PC-9 (cell line): ENCODE measurements at regions of chr18 and their contacts with region 1.

Region 1: GRCh38 chr18:62186774-62187542 is at the starts of genes PIGN and RELCH:
- DNase-seq: peak; percentile 89 to 96
- H3K4me3 ChIP-seq: peak within 1 kb of the TSS; percentile 92
- H3K27ac ChIP-seq: peak within 1 kb of the TSS; percentile 76
- H3K4me1 ChIP-seq: peaks cover 42% of the 10 kb centered on the region
- H3K27me3 ChIP-seq: no peaks in the 10 kb centered on the region
- CTCF ChIP-seq: no peak
- total RNA-seq, gene PIGN: 14.6 and 20.3 TPM in 2 replicates
- total RNA-seq, gene RELCH: 19.6 and 20.1 TPM in 2 replicates

Region 2: GRCh38 chr18:62128157-62128556 is 58.8 kb before region 1 on chr18:
- CTCF ChIA-PET with region 1: no interaction called
- POLR2A ChIA-PET with region 1: no interaction called
- intact Hi-C with region 1: no loop called
- DNase-seq: no peak
- H3K4me3 ChIP-seq: no peak overlapping the region
- H3K27ac ChIP-seq: no peak overlapping the region
- H3K4me1 ChIP-seq: no peaks in the 10 kb centered on the region
- H3K27me3 ChIP-seq: no peaks in the 10 kb centered on the region
- CTCF ChIP-seq: no peak

Region 3: DNA sequence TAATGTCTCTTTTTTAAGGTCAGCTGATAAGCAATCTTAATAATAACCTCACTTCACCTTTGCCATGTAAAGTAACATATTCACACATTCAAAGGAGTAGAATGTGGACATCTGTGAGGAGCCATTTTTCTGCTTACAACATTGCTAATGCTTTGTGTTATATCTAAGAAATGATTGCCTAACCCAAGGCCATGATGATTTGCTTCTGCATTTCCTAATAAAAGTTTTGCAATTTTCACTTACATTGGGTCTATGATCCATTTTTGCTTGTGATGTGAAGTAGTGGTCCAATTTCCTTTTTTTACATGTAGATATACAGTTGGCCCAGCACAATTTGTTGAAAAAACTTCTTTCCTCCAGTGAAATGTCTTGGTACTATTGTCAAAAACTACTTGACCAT is 22.1 kb after region 1 on chr18:
- CTCF ChIA-PET with region 1: no interaction called
- POLR2A ChIA-PET with region 1: no interaction called
- intact Hi-C with region 1: no loop called
- DNase-seq: no peak
- H3K4me3 ChIP-seq: no peak overlapping the region
- H3K27ac ChIP-seq: no peak overlapping the region
- H3K4me1 ChIP-seq: no peaks in the 10 kb centered on the region
- H3K27me3 ChIP-seq: no peaks in the 10 kb centered on the region
- CTCF ChIP-seq: no peak

Region 4: DNA sequence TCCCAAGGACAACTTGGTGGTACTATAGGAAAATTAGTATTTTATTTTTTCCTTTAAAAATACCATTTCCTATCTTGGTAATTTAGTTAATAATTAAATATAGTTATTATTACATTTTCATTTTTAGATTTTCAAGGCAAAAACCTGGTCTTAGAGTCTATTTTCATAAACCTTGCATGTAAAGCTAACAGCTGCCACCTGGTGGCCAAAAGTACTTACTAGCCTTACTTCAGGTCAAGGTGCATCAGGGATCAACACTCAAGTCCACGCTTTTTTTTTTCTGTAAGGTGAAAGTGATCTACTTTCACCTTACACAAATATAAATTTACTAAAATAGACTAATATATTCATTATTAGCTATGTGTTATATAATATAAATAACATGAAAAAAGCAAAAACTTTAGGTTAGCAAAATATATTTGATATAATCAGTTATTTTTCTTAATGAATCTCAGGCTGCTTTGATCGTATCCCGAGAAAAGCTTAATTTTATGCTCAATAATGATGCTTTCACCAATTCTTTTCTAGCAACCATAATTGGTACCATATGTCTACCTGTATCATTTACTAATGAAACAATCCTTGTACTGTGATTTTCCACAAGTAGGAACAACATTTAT is 62.6 kb after region 1 on chr18:
- CTCF ChIA-PET with region 1: no interaction called
- POLR2A ChIA-PET with region 1: no interaction called
- intact Hi-C with region 1: loop called (anchors 1 kb)
- DNase-seq: peak; percentile 40 to 63
- H3K4me3 ChIP-seq: no peak overlapping the region
- H3K27ac ChIP-seq: no peak overlapping the region
- H3K4me1 ChIP-seq: no peaks in the 10 kb centered on the region
- H3K27me3 ChIP-seq: no peaks in the 10 kb centered on the region
- CTCF ChIP-seq: peak; percentile 79

Region 5: GRCh38 chr18:62569081-62569655 is 382.2 kb after region 1 on chr18:
- CTCF ChIA-PET with region 1: interaction called, 15 read pairs
- POLR2A ChIA-PET with region 1: no interaction called
- intact Hi-C with region 1: no loop called
- DNase-seq: no peak
- H3K4me3 ChIP-seq: no peak overlapping the region
- H3K27ac ChIP-seq: no peak overlapping the region
- H3K4me1 ChIP-seq: no peaks in the 10 kb centered on the region
- H3K27me3 ChIP-seq: no peaks in the 10 kb centered on the region
- CTCF ChIP-seq: no peak

Region 6: GRCh38 chr18:62584241-62585120 is 397.5 kb after region 1 on chr18:
- CTCF ChIA-PET with region 1: no interaction called
- POLR2A ChIA-PET with region 1: no interaction called
- intact Hi-C with region 1: loop called (anchors 1 kb)
- DNase-seq: peak; percentile 68 to 75
- H3K4me3 ChIP-seq: no peak overlapping the region
- H3K27ac ChIP-seq: no peak overlapping the region
- H3K4me1 ChIP-seq: no peaks in the 10 kb centered on the region
- H3K27me3 ChIP-seq: no peaks in the 10 kb centered on the region
- CTCF ChIP-seq: peak; percentile 93

Region 7: GRCh38 chr18:62957885-62958472 is 771.0 kb after region 1 on chr18:
- CTCF ChIA-PET with region 1: no interaction called
- POLR2A ChIA-PET with region 1: no interaction called
- intact Hi-C with region 1: no loop called
- DNase-seq: peak in 1 of 2 experiments; percentile 34
- H3K4me3 ChIP-seq: no peak overlapping the region
- H3K27ac ChIP-seq: no peak overlapping the region
- H3K4me1 ChIP-seq: no peaks in the 10 kb centered on the region
- H3K27me3 ChIP-seq: no peaks in the 10 kb centered on the region
- CTCF ChIP-seq: peak; percentile 70